Activated CD4-positive, alpha-beta T cell treated with anti-CD3 and anti-CD28 coated beads for 36 hours (primary cell): ENCODE measurements at regions of chr16 and their contacts with region 1.

Region 1: DNA sequence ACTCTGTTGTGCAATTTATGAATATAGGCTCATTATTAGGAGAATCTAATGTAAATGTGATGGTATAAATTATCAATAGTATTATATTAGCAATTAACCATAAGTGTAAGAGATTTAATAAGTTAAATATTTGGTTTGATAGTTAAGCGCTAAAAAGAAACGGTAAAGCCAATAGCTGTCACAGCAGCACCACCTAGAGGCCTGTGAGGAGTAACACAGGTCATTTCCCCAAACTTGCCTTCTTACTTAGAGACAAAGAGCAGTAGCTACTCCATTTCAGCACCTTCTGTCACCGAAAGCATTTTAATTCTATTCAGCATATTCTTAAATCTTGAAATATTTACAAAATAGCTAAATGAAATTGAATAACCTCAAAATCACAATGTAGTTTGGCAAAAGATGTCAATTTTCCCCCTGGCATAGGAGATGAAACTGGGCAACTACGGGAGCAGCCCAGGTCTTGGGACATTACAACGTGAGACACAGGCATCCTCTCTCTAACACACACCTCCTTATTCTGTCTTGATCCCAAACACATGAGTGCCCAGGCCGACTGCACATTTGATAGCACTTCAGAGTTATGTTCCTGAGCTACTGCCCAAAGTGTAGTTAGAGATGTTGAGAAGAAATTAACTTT is 14.2 kb upstream of the DYNLRB2 start:
- DNase-seq: peak; percentile 71
- ATAC-seq: peak; percentile 66
- H3K4me3 Mint-ChIP-seq: no peak overlapping the region
- H3K27ac Mint-ChIP-seq: no peak overlapping the region
- H3K4me1 Mint-ChIP-seq: no peaks in the 10 kb centered on the region
- H3K27me3 Mint-ChIP-seq: no peaks in the 10 kb centered on the region

Region 2: GRCh38 chr16:80540516-80541272 is 14.2 kb after region 1 on chr16 and contains the start of gene DYNLRB2:
- CTCF ChIA-PET with region 1: interaction called, 18 read pairs
- POLR2A ChIA-PET with region 1: no interaction called
- intact Hi-C with region 1: no loop called
- DNase-seq: peak; percentile 95
- ATAC-seq: peak; percentile 91
- H3K4me3 Mint-ChIP-seq: peak within 1 kb of the TSS; percentile 97
- H3K27ac Mint-ChIP-seq: peak within 1 kb of the TSS; percentile 99
- H3K4me1 Mint-ChIP-seq: peaks cover 28% of the 10 kb centered on the region
- H3K27me3 Mint-ChIP-seq: peaks cover 4% of the 10 kb centered on the region
- total RNA-seq, gene DYNLRB2: not detected

Region 3: DNA sequence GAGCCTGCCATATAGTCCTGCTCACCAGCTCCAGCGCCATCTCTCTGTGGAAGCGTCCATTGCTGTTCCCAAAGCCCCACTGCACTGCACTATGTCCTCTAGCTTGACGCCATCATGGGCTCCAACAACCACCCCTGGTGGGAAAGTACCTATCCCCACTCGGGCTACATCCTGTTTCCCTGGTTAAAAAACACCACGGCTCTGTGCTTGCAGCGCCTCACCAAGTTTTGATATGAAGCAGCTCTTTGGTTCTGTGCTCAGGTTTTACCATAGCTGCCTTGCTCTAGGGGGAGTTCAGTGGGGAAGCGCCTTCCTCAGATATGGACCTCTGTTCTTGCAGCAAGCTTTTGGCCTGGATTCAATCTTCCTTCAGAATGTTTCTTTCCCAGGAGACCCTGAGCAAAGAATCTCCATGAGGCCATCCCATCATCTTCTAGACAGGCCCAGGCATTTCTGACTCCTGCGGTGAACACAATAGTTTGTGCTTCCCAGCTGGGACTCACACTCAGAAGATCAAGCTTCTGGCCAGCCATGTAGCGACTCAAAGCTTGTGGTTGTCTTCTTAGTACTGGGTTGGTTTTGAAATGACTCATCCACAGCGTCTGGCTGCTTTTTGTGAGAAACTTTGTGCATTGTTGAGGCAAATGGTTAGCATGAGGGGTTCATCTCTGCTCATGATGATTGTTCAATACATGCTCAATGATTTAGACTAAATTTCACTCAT is 53.7 kb after region 1 on chr16:
- CTCF ChIA-PET with region 1: interaction called, 17 read pairs
- POLR2A ChIA-PET with region 1: no interaction called
- intact Hi-C with region 1: no loop called
- DNase-seq: peak; percentile 86
- ATAC-seq: peak; percentile 91
- H3K4me3 Mint-ChIP-seq: peak overlapping the region; percentile 60
- H3K27ac Mint-ChIP-seq: peak overlapping the region; percentile 99
- H3K4me1 Mint-ChIP-seq: peaks cover 50% of the 10 kb centered on the region
- H3K27me3 Mint-ChIP-seq: peaks cover 2% of the 10 kb centered on the region

Region 4: GRCh38 chr16:80804056-80804450 is 277.5 kb after region 1 on chr16:
- CTCF ChIA-PET with region 1: interaction called, 25 read pairs
- POLR2A ChIA-PET with region 1: interaction called, 3 read pairs
- intact Hi-C with region 1: no loop called
- DNase-seq: peak; percentile 81
- ATAC-seq: peak; percentile 48
- H3K4me3 Mint-ChIP-seq: peak overlapping the region; percentile 84
- H3K27ac Mint-ChIP-seq: peak overlapping the region; percentile 89
- H3K4me1 Mint-ChIP-seq: peaks cover 32% of the 10 kb centered on the region
- H3K27me3 Mint-ChIP-seq: no peaks in the 10 kb centered on the region

Region 5: DNA sequence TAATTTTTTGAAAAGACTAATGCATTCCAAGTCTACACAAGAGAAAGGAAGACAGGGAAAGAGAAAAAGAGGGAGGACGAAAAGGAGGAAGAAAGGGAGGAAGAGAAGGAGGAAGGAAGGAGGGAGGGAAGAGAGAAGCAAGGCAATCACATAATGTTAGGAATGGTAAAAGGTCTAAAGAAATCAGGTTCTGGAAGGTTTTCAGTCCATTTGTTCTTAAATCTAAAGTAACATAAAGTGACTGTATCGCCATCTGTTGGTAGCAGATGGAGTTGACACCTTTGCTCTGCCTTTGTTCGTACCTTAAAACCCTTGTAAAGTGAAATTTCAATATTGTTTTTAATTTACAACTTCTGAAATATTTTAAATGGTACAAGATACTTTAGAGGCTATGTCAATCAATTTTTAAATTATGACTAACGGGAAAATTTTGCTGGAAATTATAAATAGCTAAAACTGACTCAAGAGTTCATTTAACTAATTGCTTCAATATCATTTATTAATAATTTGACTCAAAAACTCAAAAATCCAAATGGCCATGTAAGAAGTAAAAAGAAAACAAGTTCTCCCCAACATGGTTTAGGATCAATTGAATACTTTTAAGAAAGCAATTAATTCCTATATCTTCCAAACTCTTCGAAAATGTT is 298.3 kb after region 1 on chr16:
- CTCF ChIA-PET with region 1: interaction called, 133 read pairs
- POLR2A ChIA-PET with region 1: no interaction called
- intact Hi-C with region 1: loop called (anchors 1 kb)
- DNase-seq: peak; percentile 57
- ATAC-seq: no peak
- H3K4me3 Mint-ChIP-seq: no peak overlapping the region
- H3K27ac Mint-ChIP-seq: no peak overlapping the region
- H3K4me1 Mint-ChIP-seq: no peaks in the 10 kb centered on the region
- H3K27me3 Mint-ChIP-seq: peaks cover 12% of the 10 kb centered on the region

Region 6: DNA sequence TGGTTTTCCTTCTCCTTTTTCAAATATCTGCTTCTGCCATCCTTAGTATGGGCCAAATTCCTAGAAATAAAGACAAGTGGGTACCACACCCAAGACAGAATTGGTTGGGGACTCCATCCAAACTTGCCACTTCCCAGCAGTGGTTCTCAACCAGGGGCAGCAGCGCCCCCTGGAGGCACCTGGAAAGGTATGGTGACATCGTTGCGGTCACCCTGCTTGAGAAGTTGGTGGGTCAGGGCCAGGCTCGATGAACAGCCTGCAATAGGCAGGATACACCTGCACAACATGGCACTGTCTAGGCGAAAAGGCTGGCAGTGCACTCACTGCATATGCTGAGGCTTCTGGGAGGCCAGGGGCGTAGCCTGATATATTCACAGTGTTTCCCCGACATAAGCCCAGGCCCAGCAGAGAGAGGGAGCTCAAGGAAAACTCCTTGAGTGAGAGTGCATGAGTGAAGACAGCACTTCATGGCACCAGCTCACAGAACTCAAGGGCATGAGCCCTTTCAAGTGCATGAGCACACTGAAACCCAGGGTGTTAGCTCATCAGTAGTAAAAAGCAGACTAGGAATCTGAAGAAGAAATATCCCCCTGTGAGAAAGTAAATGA is 422.4 kb after region 1 on chr16:
- CTCF ChIA-PET with region 1: interaction called, 3 read pairs
- POLR2A ChIA-PET with region 1: no interaction called
- intact Hi-C with region 1: loop called in 1 of 2 experiments (anchors 5 kb)
- DNase-seq: peak; percentile 79
- ATAC-seq: peak; percentile 62
- H3K4me3 Mint-ChIP-seq: no peak overlapping the region
- H3K27ac Mint-ChIP-seq: no peak overlapping the region
- H3K4me1 Mint-ChIP-seq: peaks cover 22% of the 10 kb centered on the region
- H3K27me3 Mint-ChIP-seq: peaks cover 10% of the 10 kb centered on the region